Activated T-helper 1 cell treated with anti-CD3 and anti-CD28 coated beads, Interleukin-12 subunit alpha, Interleukin-12 subunit beta, Interleukin-2, Interleukin-4 antibody, amounts not matched to agents 30 ng/mL and 10 ng/mL and 1 ng/mL, durations not matched to agents 14 hours and 24 hours and 36 hours (primary cell): ENCODE measurements at regions of chr11 and their contacts with region 1.

Region 1: DNA sequence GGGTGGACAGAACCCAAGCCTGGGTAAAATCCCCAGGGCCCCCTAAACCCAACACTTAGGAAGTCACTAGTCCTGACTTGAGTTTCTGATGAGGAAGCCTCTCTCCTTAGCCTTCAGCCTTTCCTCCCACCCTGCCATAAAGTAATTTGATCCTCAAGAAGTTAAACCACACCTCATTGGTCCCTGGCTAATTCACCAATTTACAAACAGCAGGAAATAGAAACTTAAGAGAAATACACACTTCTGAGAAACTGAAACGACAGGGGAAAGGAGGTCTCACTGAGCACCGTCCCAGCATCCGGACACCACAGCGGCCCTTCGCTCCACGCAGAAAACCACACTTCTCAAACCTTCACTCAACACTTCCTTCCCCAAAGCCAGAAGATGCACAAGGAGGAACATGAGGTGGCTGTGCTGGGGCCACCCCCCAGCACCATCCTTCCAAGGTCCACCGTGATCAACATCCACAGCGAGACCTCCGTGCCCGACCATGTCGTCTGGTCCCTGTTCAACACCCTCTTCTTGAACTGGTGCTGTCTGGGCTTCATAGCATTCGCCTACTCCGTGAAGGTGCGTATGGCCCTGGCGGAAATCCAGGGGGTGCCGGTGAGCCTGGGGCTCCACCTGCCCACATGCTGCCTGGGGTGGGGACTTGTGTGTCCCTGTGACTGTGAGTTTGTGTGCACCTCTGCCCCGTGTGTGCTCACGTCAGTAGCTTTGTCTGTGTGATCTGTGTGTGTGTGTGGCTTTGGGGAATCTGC is at the start of gene IFITM1:
- DNase-seq: peak; percentile 64
- H3K4me3 Mint-ChIP-seq: peak within 1 kb of the TSS; percentile 93
- H3K27ac Mint-ChIP-seq: peak within 1 kb of the TSS; percentile 96
- H3K4me1 Mint-ChIP-seq: peaks cover 44% of the 10 kb centered on the region
- H3K27me3 Mint-ChIP-seq: no peaks in the 10 kb centered on the region
- total RNA-seq, gene IFITM1: 208 and 214 TPM in 2 replicates

Region 2: DNA sequence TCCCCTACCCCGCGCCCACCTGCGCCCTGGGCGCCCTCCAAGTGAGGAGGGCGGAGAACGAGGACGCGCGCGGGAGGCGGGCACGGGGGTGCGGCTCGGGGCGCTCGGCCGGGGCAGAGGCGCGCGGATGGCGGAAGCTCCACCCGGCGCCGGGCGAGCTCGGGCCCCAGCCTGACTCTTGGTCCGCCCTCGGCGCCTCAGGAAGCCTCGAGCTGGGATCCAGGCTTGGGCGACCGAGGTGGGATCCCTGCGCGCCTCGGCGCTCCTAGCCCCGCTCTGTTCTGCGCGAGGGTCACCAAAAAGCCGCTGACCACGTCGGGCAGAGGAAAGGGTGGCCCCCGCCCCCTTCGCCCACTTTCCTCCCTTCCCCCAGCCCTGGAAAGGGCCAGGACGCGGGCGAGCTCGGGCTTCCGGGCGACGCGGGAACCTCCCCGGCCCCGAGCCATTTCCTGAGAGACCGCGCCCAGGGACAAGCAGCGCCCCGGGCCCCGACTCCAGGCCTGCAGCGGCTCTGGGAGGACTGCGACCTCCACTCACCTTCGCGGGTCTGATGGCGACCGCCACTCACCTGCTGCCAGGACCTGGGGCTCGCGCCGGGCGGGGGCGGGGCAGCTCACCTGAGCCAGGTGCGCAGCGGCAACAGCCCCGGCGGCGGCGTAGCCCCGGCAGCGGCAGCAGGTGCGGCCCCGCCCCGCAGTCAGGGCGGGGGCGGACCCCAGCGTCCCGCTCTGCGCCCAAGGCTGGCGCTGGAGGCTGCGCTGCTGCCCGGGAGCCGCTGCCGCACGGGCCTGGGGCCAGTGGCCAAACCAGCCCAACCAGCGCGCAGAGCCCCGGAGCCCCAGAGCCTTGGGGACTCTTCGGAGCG is 103.0 kb after region 1 on chr11:
- intact Hi-C with region 1: loop called (anchors 5 kb)
- DNase-seq: peak; percentile 48
- H3K4me3 Mint-ChIP-seq: peak overlapping the region; percentile 65
- H3K27ac Mint-ChIP-seq: peak overlapping the region; percentile 44
- H3K4me1 Mint-ChIP-seq: peaks cover 30% of the 10 kb centered on the region
- H3K27me3 Mint-ChIP-seq: no peaks in the 10 kb centered on the region